ENCODE measurements at regions of chr20 and their contacts with region 1.

Region 1: GRCh38 chr20:62793912-62794724 is 2.2 kb upstream of the MRGBP start:
- DNase-seq: peak; percentile 98
- ATAC-seq: peak; percentile 78
- H3K4me3 ChIP-seq: peak overlapping the region; percentile 60 to 77 (median 69)
- H3K4me3 Mint-ChIP-seq: peak overlapping the region; percentile 77
- H3K27ac ChIP-seq: peak overlapping the region; percentile 91 to 93
- H3K27ac Mint-ChIP-seq: peak overlapping the region; percentile 64
- H3K4me1 ChIP-seq: peaks cover 14 to 45% of the 10 kb centered on the region in 2 donors
- H3K4me1 Mint-ChIP-seq: peaks cover 36% of the 10 kb centered on the region
- H3K27me3 ChIP-seq: no peaks in the 10 kb centered on the region
- H3K27me3 Mint-ChIP-seq: no peaks in the 10 kb centered on the region
- CTCF ChIP-seq: no peak

Region 2: DNA sequence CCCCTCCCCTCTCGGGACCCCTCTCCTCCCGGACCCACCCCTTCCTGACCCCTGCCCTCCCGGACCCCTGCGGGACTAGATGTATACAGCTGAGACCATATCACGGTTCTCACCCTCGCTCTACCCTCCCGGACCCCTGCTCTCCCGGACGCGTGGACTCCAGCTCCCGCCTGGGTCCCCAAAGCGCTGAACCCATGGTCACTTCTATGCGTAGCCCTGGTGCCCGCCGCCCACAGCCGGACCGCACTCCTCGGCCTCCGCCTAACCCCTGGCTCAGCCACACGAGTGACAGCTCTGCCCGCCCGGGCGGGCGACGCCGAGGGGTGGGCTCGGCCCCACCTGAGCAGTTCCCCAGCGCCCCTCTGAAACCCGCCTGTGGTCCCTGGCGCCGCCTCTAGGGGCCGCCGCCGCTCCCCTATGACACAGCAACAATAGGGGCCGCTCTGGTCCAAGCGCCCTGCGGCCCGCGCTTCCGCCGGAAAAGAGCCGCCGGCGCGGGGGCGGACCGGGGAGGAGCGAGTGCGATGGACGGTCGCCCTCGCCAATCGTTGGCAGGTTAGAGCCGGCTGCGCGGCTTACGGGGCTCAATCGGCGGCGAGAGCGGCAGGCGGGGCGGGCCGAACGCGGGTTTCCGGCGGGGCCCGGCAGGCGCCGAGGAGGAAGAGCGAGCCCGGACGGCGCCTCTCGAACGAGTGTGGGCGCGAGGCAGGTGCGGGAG is 491.6 kb before region 1 on chr20 and contains the start of gene ADRM1:
- CTCF ChIA-PET with region 1: no interaction called
- POLR2A ChIA-PET with region 1: interaction called, 9 read pairs
- intact Hi-C with region 1: loop called (anchors 2 kb)
- DNase-seq: peak; percentile 98
- ATAC-seq: peak; percentile 86
- H3K4me3 ChIP-seq: peak within 1 kb of the TSS; percentile 35 to 88 (median 70)
- H3K4me3 Mint-ChIP-seq: peak within 1 kb of the TSS; percentile 97
- H3K27ac ChIP-seq: peak within 1 kb of the TSS; percentile 73 to 87
- H3K27ac Mint-ChIP-seq: peak within 1 kb of the TSS; percentile 96
- H3K4me1 ChIP-seq: peaks cover 15 to 29% of the 10 kb centered on the region in 2 donors
- H3K4me1 Mint-ChIP-seq: peaks cover 23% of the 10 kb centered on the region
- H3K27me3 ChIP-seq: no peaks in the 10 kb centered on the region
- H3K27me3 Mint-ChIP-seq: no peaks in the 10 kb centered on the region
- CTCF ChIP-seq: peak; percentile 76
- total RNA-seq, gene ADRM1: 64.2 and 73.9 TPM in 2 replicates

Region 3: GRCh38 chr20:62500237-62500864 is 293.8 kb before region 1 on chr20:
- CTCF ChIA-PET with region 1: interaction called, 22 read pairs
- POLR2A ChIA-PET with region 1: interaction called, 9 read pairs
- intact Hi-C with region 1: loop called (anchors 1 kb)
- DNase-seq: peak; percentile 87
- ATAC-seq: peak; percentile 65
- H3K4me3 ChIP-seq: no peak overlapping the region
- H3K4me3 Mint-ChIP-seq: peak overlapping the region; percentile 15
- H3K27ac ChIP-seq: no peak overlapping the region
- H3K27ac Mint-ChIP-seq: peak overlapping the region; percentile 67
- H3K4me1 ChIP-seq: peaks cover 28 to 44% of the 10 kb centered on the region in 2 donors
- H3K4me1 Mint-ChIP-seq: peaks cover 36% of the 10 kb centered on the region
- H3K27me3 ChIP-seq: peaks cover 0 to 5% (median 0%) of the 10 kb centered on the region in 4 experiments
- H3K27me3 Mint-ChIP-seq: peaks cover 3% of the 10 kb centered on the region
- CTCF ChIP-seq: peak; percentile 80

Region 4: DNA sequence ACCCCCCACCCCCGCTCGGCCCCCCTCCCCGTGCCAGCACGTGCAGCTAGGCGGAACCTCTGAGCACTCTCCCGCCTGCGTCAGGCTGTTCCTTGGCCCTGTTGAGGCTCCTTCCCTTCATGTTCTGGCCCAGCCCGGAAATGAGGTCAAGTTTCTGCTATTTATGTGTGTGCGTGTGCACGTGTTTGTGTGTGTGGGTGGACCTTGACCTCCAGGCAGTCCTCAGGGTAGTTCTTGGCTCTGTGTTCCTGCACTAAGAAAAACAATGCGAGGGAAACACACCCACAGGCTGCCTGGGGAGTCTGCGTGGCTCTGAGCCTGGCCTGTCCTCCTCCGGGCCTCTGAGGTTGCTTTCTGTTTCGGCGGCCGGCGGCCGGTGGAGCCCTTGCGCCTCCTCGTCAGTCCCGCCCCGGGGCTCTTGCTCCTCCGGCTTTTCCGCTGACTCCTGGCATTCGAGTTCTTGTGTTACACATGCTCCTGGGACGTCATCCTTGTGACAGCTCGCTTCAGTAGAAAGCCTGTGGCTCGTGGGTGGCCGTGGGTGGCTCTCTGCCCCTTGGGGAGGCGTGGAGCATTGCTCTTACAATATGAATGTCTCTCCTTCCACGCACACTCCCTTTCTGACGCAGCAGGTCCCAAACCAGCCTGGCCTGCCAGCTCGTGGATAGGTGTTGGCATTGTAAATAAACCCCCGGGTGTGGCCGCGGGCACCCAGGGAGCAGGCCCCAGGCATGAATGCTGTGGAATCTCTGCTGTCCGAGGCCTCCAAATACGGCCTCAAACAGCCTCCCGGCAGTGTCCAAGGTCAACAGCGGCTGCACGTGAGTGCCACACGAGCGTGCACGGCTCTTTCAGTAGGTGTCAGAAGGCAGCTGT is 141.8 kb before region 1 on chr20:
- CTCF ChIA-PET with region 1: interaction called, 10 read pairs
- POLR2A ChIA-PET with region 1: interaction called, 17 read pairs
- intact Hi-C with region 1: loop called (anchors 1 kb)
- DNase-seq: peak; percentile 86
- ATAC-seq: peak; percentile 65
- H3K4me3 ChIP-seq: peak overlapping the region in 4 of 5 experiments; percentile 18 to 57 (median 44)
- H3K4me3 Mint-ChIP-seq: peak overlapping the region; percentile 87
- H3K27ac ChIP-seq: peak overlapping the region; percentile 85 to 91
- H3K27ac Mint-ChIP-seq: peak overlapping the region; percentile 96
- H3K4me1 ChIP-seq: peaks cover 51 to 57% of the 10 kb centered on the region in 2 donors
- H3K4me1 Mint-ChIP-seq: peaks cover 59% of the 10 kb centered on the region
- H3K27me3 ChIP-seq: no peaks in the 10 kb centered on the region
- H3K27me3 Mint-ChIP-seq: no peaks in the 10 kb centered on the region
- CTCF ChIP-seq: no peak

Region 5: GRCh38 chr20:62808211-62808865 is 14.2 kb after region 1 on chr20:
- CTCF ChIA-PET with region 1: interaction called, 18 read pairs
- POLR2A ChIA-PET with region 1: interaction called, 28 read pairs
- intact Hi-C with region 1: loop called (anchors 1 kb)
- DNase-seq: peak; percentile 81
- ATAC-seq: peak; percentile 50
- H3K4me3 ChIP-seq: no peak overlapping the region
- H3K4me3 Mint-ChIP-seq: peak overlapping the region; percentile 72
- H3K27ac ChIP-seq: no peak overlapping the region
- H3K27ac Mint-ChIP-seq: peak overlapping the region; percentile 86
- H3K4me1 ChIP-seq: peaks cover 17 to 38% of the 10 kb centered on the region in 2 donors
- H3K4me1 Mint-ChIP-seq: peaks cover 33% of the 10 kb centered on the region
- H3K27me3 ChIP-seq: no peaks in the 10 kb centered on the region
- H3K27me3 Mint-ChIP-seq: no peaks in the 10 kb centered on the region
- CTCF ChIP-seq: peak; percentile 93

Region 6: GRCh38 chr20:62953839-62954703 is 160.0 kb after region 1 on chr20:
- CTCF ChIA-PET with region 1: no interaction called
- POLR2A ChIA-PET with region 1: no interaction called
- intact Hi-C with region 1: loop called (anchors 10 kb)
- DNase-seq: peak; percentile 94
- ATAC-seq: peak; percentile 82
- H3K4me3 ChIP-seq: peak overlapping the region; percentile 23 to 62 (median 54)
- H3K4me3 Mint-ChIP-seq: peak overlapping the region; percentile 85
- H3K27ac ChIP-seq: peak overlapping the region; percentile 82 to 91
- H3K27ac Mint-ChIP-seq: peak overlapping the region; percentile 92
- H3K4me1 ChIP-seq: peaks cover 31 to 47% of the 10 kb centered on the region in 2 donors
- H3K4me1 Mint-ChIP-seq: peaks cover 44% of the 10 kb centered on the region
- H3K27me3 ChIP-seq: no peaks in the 10 kb centered on the region
- H3K27me3 Mint-ChIP-seq: no peaks in the 10 kb centered on the region
- CTCF ChIP-seq: no peak

Measured in B cell (primary cell).